ENCODE measurements at regions of chr18 and their contacts with region 1.

Region 1: GRCh38 chr18:55343396-55344073 is 244.5 kb downstream of the TCF4 start:
- DNase-seq: no peak
- H3K4me3 ChIP-seq: no peak overlapping the region
- CTCF ChIP-seq: peak; percentile 26

Region 2: GRCh38 chr18:55243857-55244256 is 99.7 kb before region 1 on chr18:
- CTCF ChIA-PET with region 1: interaction called, 11 read pairs
- POLR2A ChIA-PET with region 1: no interaction called
- DNase-seq: no peak
- H3K4me3 ChIP-seq: no peak overlapping the region
- CTCF ChIP-seq: no peak

Region 3: GRCh38 chr18:55365342-55365741 is 21.8 kb after region 1 on chr18:
- CTCF ChIA-PET with region 1: interaction called, 13 read pairs
- POLR2A ChIA-PET with region 1: no interaction called
- DNase-seq: no peak
- H3K4me3 ChIP-seq: no peak overlapping the region
- CTCF ChIP-seq: no peak

Region 4: DNA sequence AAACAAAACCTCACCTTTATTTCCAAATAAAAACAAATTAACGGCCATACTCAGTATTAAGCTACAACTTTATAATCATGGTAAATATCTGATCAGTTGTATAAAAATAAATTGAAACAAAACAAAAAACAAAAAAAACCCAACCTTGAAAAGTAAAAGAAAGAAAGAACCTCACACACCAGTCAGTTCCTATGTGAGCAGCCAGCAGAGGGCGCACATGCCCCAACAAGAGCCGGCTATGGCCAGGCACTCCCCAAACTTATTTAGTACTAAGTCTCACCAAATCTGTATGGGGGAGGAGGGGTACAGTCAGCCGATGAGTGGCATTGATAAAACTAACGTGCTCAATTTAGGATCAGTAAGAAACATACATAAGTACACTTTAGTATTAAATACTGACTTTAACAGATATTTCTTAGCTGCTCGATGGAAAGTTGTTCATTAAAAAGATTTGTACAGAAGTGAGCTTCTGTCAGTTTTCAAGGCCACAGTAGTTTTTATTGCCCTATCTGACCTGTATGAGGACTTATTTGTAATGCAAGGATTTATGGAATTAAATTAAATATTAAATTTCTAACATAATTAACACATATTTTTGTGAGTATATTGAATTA is 71.8 kb after region 1 on chr18:
- CTCF ChIA-PET with region 1: interaction called, 16 read pairs
- POLR2A ChIA-PET with region 1: no interaction called
- DNase-seq: no peak
- H3K4me3 ChIP-seq: no peak overlapping the region
- CTCF ChIP-seq: peak; percentile 78

Region 5: GRCh38 chr18:56575819-56576663 is 1232.5 kb after region 1 on chr18:
- CTCF ChIA-PET with region 1: interaction called, 17 read pairs
- POLR2A ChIA-PET with region 1: no interaction called
- DNase-seq: no peak
- H3K4me3 ChIP-seq: no peak overlapping the region
- CTCF ChIP-seq: peak; percentile 40